ENCODE measurements at regions of chr7 and their contacts with region 1.

Region 1: DNA sequence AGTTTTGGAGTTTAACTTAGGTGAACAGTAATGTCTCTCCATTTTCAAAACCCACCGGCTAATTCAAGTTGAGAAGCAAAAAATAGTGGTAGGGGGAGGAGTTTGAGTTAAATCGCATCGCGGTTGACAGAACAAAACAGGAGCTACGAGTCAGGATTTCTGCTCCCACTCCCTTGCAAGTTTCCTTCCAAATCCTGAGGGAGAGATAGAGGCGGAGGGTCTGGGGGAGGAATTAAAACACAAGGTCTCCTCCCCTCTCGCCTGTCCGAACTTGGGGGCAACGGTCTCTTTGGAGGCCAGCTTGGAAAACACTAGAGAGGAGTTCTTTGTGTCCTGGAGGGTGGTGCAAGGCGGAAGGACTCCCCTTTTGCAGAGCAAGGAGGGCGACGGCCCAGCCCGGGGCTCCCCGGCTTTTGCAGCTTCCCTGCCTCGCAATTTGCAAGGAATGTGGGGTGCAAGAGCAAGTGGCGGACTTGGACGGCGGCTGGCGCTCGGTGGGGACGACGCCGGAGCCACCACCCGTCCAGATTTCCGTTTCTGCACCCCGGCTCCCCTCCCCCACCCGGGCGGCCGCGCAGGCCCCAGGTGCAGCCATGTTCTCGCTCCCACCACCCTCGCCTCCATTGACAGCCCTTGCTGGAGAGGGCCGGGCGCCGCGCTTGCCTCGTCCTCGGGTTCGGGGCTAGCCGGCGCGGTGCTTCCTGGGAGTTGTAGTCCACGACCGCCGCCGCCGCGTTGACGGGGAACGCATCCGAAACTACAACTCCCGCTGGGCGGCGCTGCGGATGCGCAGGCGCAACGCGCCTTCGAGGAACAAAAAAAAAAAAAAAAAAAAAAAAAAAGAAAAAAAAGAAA is 454 bp upstream of the GTF2I start:
- DNase-seq: peak; percentile 96
- ATAC-seq: peak; percentile 58
- H3K4me3 Mint-ChIP-seq: peak overlapping the region; percentile 94
- H3K27ac Mint-ChIP-seq: peak overlapping the region; percentile 95
- H3K4me1 Mint-ChIP-seq: peaks cover 53% of the 10 kb centered on the region
- H3K27me3 Mint-ChIP-seq: no peaks in the 10 kb centered on the region
- CTCF ChIP-seq: no peak

Region 2: DNA sequence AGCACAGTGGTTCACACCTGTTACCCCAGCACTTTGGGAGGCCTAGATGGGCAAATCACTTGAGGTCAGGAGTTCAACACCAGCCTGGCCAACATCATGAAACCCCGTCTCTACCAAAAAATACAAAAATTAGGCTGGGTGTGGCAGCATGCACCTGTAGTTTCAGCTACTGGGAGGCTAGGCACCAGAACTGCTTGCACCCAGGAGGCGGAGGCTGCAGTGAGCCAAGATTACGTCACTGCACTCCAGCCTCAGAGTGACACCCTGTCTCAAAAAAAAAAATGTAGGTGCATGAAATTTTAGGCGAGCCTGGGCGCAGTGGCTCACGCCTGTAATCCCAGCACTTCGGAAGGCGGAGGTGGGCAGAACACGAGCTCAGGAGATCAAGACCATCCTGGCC is 1109.2 kb before region 1 on chr7:
- CTCF ChIA-PET with region 1: no interaction called
- POLR2A ChIA-PET with region 1: no interaction called
- intact Hi-C with region 1: no loop called
- DNase-seq: no peak
- ATAC-seq: no peak
- H3K4me3 Mint-ChIP-seq: no peak overlapping the region
- H3K27ac Mint-ChIP-seq: no peak overlapping the region
- H3K4me1 Mint-ChIP-seq: peaks cover 3% of the 10 kb centered on the region
- H3K27me3 Mint-ChIP-seq: no peaks in the 10 kb centered on the region
- CTCF ChIP-seq: no peak

Region 3: GRCh38 chr7:74101061-74101681 is 555.9 kb before region 1 on chr7:
- CTCF ChIA-PET with region 1: no interaction called
- POLR2A ChIA-PET with region 1: interaction called, 6 read pairs
- intact Hi-C with region 1: loop called (anchors 10 kb)
- DNase-seq: peak; percentile 60
- ATAC-seq: peak; percentile 79
- H3K4me3 Mint-ChIP-seq: peak overlapping the region; percentile 70
- H3K27ac Mint-ChIP-seq: peak overlapping the region; percentile 98
- H3K4me1 Mint-ChIP-seq: peaks cover 38% of the 10 kb centered on the region
- H3K27me3 Mint-ChIP-seq: no peaks in the 10 kb centered on the region
- CTCF ChIP-seq: no peak

Region 4: GRCh38 chr7:74231232-74231590 is 425.9 kb before region 1 on chr7:
- CTCF ChIA-PET with region 1: no interaction called
- POLR2A ChIA-PET with region 1: interaction called, 10 read pairs
- intact Hi-C with region 1: no loop called
- DNase-seq: peak; percentile 63
- ATAC-seq: peak; percentile 85
- H3K4me3 Mint-ChIP-seq: peak overlapping the region; percentile 55
- H3K27ac Mint-ChIP-seq: peak overlapping the region; percentile 92
- H3K4me1 Mint-ChIP-seq: peaks cover 68% of the 10 kb centered on the region
- H3K27me3 Mint-ChIP-seq: no peaks in the 10 kb centered on the region
- CTCF ChIP-seq: no peak

Region 5: DNA sequence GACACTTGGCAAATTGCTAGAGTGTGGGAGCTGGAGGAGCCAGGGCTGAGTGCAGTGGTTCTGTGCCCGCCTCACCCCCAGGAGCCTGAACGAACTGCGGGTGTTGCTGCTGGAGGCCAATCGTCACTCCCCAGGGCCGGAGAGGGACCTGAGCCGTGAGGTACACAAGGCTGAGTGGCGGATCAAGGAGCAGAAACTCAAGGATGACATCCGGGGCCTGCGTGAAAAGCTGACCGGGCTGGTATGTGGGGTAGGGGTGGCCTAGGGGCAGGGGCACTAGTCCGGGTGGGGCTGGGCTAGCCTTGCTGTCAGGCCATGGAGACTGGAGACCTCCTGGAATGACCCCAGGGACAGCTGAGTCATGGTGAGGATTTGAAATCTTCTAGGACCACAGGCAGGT is 260.1 kb before region 1 on chr7:
- CTCF ChIA-PET with region 1: no interaction called
- POLR2A ChIA-PET with region 1: no interaction called
- intact Hi-C with region 1: no loop called
- DNase-seq: no peak
- ATAC-seq: no peak
- H3K4me3 Mint-ChIP-seq: no peak overlapping the region
- H3K27ac Mint-ChIP-seq: no peak overlapping the region
- H3K4me1 Mint-ChIP-seq: no peaks in the 10 kb centered on the region
- H3K27me3 Mint-ChIP-seq: no peaks in the 10 kb centered on the region
- CTCF ChIP-seq: no peak

Region 6: GRCh38 chr7:74617180-74617744 is 39.8 kb before region 1 on chr7:
- CTCF ChIA-PET with region 1: no interaction called
- POLR2A ChIA-PET with region 1: interaction called, 10 read pairs
- intact Hi-C with region 1: loop called (anchors 2 kb)
- DNase-seq: peak; percentile 20
- ATAC-seq: peak; percentile 53
- H3K4me3 Mint-ChIP-seq: peak overlapping the region; percentile 72
- H3K27ac Mint-ChIP-seq: peak overlapping the region; percentile 85
- H3K4me1 Mint-ChIP-seq: peaks cover 30% of the 10 kb centered on the region
- H3K27me3 Mint-ChIP-seq: no peaks in the 10 kb centered on the region
- CTCF ChIP-seq: no peak

Region 7: DNA sequence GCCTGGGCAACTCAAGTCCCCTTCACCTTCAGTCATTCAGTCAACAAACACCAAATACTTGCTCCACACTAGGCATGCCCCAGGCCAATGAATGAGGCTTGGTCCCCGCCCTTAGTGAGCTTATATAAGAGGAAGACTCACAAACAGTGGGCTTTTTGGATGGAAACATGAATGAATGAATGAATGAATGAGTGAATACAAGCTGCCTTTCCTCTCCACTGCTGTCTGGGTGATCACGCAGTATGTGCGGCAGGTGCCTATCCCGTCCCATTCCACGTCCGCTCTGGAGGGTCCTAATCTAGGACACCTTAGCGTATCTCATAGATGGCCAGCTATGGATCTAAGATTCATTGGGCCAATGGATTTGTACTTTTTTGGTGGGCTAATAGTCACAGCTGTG is 19.3 kb before region 1 on chr7:
- CTCF ChIA-PET with region 1: interaction called, 3 read pairs
- POLR2A ChIA-PET with region 1: interaction called, 30 read pairs
- intact Hi-C with region 1: no loop called
- DNase-seq: no peak
- ATAC-seq: no peak
- H3K4me3 Mint-ChIP-seq: no peak overlapping the region
- H3K27ac Mint-ChIP-seq: no peak overlapping the region
- H3K4me1 Mint-ChIP-seq: peaks cover 8% of the 10 kb centered on the region
- H3K27me3 Mint-ChIP-seq: no peaks in the 10 kb centered on the region
- CTCF ChIP-seq: no peak

Region 8: DNA sequence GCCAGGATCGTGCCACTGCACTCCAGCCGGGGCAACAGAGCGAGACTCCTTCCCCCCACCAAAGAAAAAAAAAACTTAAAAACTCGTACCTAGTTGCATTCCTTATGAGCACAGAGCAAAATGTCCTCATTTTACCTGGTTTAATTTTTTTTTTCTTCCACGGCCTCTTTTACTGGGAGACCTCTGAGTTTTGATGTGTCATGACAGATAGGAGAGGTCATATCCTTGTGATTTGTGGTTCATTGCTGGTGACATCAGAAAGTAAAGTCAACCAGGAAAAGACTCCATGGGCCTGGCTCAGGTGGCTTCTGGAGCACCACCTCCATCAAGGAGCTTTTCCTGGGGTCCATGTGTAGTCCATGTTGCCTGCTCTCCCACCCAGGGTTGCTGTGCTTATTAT is 26.7 kb after region 1 on chr7:
- CTCF ChIA-PET with region 1: no interaction called
- POLR2A ChIA-PET with region 1: no interaction called
- intact Hi-C with region 1: no loop called
- DNase-seq: no peak
- ATAC-seq: no peak
- H3K4me3 Mint-ChIP-seq: no peak overlapping the region
- H3K27ac Mint-ChIP-seq: no peak overlapping the region
- H3K4me1 Mint-ChIP-seq: peaks cover 33% of the 10 kb centered on the region
- H3K27me3 Mint-ChIP-seq: no peaks in the 10 kb centered on the region
- CTCF ChIP-seq: no peak

Region 9: DNA sequence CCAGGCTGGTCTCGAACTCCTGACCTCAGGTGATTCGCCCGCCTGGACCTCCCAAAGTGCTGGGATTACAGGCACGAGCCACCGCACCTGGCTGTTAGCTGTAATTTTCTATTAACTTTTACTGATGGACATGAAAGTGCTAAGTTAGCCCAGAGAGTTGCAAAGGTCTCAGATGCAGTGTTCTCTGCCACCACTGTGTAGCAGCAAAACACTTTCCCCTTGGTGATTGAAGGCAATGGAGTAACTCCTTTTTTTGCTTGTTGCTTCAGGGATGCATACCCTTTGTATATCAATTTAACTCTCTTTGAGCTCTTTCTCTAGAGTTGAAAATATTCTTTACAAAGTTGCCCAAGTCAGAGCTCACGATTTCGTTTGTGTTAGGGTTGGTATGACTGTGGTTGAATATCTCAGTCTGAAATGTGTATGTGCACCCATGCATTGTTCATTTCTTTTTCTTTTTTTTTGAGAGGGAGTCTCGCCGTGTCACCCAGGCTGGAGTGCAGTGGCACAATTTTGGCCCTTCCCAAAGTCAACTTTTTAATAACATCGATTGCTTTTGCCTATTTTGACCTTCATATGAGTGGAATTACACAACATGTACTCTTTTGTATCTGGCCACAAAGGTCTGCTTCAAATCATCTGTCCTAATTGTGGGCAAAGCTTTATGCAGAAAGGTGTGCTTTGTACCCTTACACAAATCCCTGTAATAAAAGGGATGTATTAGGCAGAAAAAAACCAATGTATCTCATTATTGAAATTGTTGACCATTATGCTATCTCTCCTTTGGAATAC is 53.0 kb after region 1 on chr7:
- CTCF ChIA-PET with region 1: no interaction called
- POLR2A ChIA-PET with region 1: no interaction called
- intact Hi-C with region 1: no loop called
- DNase-seq: no peak
- ATAC-seq: no peak
- H3K4me3 Mint-ChIP-seq: no peak overlapping the region
- H3K27ac Mint-ChIP-seq: no peak overlapping the region
- H3K4me1 Mint-ChIP-seq: no peaks in the 10 kb centered on the region
- H3K27me3 Mint-ChIP-seq: no peaks in the 10 kb centered on the region
- CTCF ChIP-seq: no peak

Measured in activated B cell treated with CpG ODN at 0.5 μM for 24 hours (primary cell).